A549 (cell line): ENCODE measurements at regions of chr16 and their contacts with region 1.

Region 1: DNA sequence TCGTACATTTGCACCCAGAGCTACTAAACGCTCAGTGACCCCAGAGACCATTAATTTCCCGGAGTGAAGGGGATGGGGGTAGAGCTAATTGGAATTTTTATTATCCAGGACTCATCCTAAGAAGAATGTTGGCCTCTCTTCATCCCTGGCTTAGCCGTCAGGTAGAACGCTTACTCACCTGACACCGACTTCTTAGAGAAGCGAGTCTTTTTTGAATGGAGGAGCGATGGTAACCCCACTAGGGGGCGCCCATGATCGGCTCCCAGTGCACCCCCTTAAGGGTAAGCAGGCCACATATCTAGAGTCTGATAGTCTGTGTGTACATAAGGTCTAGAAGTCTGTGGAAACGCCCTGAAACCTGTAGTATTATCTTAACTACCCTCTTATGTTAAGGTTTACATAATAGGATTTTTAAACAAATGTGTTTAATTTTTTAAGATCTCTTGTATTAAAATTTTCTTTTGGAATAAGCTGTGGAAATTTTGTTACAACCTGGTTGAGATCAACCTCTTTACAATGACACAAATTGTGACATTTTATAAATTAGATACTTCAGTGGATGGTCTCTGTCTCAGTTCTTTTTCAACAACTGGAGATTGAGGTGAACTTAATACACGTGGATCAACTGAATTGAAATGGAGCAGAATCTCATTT is 229.8 kb downstream of the CPPED1 start:
- DNase-seq: peak; percentile 71 to 73
- ATAC-seq: peak; percentile 82 to 91
- H3K4me3 ChIP-seq: no peak overlapping the region
- H3K27ac ChIP-seq: peak overlapping the region; percentile 44 to 69; a peak in 5 of 6 replicates
- H3K4me1 ChIP-seq: peaks cover 8% of the 10 kb centered on the region
- CTCF ChIP-seq: peak; percentile 86
- EP300 ChIP-seq: no peak
- POLR2A ChIP-seq: no peak
- RAD21 ChIP-seq: peak; percentile 88 to 92

Region 2: DNA sequence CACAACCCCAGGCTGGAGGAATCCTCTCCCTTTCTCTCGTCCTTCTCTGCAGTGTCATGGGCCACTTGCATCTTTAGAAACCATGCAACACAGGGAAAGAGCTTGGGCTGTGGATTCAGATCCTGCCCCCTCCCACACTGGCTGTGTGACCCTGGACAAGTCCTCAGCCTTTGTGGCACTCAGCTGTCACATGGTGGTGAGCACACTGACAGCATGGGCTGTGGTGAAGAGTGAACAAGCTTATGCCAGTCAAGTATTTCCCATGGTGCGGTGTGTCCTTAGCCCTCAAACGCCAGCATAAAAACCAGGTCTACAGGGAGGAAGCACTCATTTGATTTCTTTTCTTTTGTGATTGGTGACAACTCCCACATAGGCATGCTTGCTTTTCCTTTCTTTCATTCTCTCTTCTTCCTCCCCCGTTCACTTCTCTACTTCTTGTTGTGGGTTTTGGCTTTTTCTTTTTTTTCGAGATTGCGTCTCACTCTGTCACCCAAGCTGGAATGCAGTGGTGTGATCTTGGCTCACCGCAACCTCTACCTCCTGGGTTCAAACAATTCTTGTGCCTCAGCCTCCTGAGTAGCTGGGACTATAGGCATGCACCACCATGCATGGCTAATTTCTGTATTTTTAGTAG is 84.4 kb before region 1 on chr16:
- CTCF ChIA-PET with region 1: no interaction called
- POLR2A ChIA-PET with region 1: no interaction called
- DNase-seq: no peak
- ATAC-seq: no peak
- H3K4me3 ChIP-seq: no peak overlapping the region
- H3K27ac ChIP-seq: no peak overlapping the region
- H3K4me1 ChIP-seq: no peaks in the 10 kb centered on the region
- CTCF ChIP-seq: no peak
- EP300 ChIP-seq: no peak
- POLR2A ChIP-seq: no peak
- RAD21 ChIP-seq: no peak

Region 3: GRCh38 chr16:12553191-12553590 is 20.7 kb before region 1 on chr16:
- CTCF ChIA-PET with region 1: no interaction called
- POLR2A ChIA-PET with region 1: no interaction called
- DNase-seq: no peak
- ATAC-seq: no peak
- H3K4me3 ChIP-seq: no peak overlapping the region
- H3K27ac ChIP-seq: no peak overlapping the region
- H3K4me1 ChIP-seq: no peaks in the 10 kb centered on the region
- CTCF ChIP-seq: no peak
- EP300 ChIP-seq: no peak
- POLR2A ChIP-seq: no peak
- RAD21 ChIP-seq: no peak

Region 4: DNA sequence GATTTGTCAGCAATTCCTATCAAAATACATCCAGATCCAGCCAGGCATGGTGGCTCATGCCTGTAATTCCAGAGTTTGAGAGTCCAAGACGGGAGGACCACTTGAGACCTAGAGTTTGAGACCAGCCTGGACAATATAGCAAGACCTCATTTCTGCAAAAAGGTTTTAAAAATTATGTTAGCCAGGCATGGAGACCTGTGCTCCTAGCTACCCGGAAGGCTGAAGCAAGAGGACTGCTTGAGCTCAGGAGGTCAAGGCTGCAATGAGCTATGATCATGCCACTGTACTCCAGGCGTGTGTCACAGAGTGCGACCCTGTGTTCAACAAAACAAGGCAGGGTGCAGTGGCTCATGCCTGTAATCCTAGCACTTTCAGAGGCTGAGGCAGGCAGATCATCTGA is 14.7 kb after region 1 on chr16:
- CTCF ChIA-PET with region 1: interaction called, 12 read pairs
- POLR2A ChIA-PET with region 1: no interaction called
- DNase-seq: no peak
- ATAC-seq: no peak
- H3K4me3 ChIP-seq: no peak overlapping the region
- H3K27ac ChIP-seq: no peak overlapping the region
- H3K4me1 ChIP-seq: no peaks in the 10 kb centered on the region
- CTCF ChIP-seq: no peak
- EP300 ChIP-seq: no peak
- POLR2A ChIP-seq: no peak
- RAD21 ChIP-seq: no peak

Region 5: DNA sequence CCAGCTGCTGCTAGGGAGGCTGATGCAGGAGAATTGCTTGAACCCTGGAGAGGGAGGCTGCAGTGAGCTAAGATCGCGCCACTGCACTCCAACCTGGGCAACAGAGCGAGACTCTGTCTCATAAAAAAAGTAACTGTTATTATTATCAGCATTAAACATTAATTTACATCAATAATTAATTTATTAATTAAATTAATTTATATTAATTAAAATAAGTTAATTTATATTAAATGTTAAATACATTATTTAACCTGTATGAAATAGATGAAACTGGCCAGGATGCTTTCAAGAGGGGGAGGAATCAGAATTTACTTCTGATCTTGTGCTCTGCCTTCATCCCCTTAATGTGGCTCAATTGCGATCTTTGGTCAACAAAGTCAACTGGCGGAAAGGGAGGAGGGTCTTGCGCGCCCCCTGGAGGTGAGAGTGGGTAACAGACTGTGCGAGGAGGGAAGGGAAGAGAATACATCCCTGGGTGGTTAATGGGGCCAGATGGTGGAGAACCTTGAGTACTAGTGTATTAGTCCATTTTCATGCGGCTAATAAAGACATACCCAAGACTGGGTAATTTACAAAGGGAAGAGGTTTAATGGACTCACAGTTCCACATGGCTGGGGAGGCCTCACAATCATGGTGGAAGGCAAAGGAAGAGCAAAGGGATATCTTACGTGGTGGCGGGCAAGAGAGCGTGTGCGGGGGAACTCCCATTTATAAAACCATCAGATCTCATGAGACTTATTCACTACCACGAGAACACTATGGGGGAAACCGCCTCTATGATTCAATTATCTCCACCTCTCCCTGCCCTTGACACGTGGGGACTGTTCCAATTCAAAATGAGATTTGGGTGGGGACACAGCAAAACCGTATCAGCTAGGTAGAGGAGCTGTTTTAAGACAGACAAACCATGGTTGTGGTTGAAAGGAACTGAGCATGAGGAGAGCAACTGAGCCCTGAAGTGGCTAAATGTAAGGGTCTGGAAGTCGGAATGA is 245.6 kb after region 1 on chr16:
- CTCF ChIA-PET with region 1: interaction called, 10 read pairs
- POLR2A ChIA-PET with region 1: no interaction called
- DNase-seq: peak; percentile 63 to 67
- ATAC-seq: peak; percentile 50 to 82; a peak in 4 of 6 replicates
- H3K4me3 ChIP-seq: no peak overlapping the region
- H3K27ac ChIP-seq: no peak overlapping the region
- H3K4me1 ChIP-seq: peaks cover 9% of the 10 kb centered on the region; the same call in 1 of the 3 replicates
- CTCF ChIP-seq: peak; percentile 58
- EP300 ChIP-seq: no peak
- POLR2A ChIP-seq: no peak
- RAD21 ChIP-seq: peak; percentile 75 to 89